ENCODE measurements at regions of chr20 and their contacts with region 1.

Region 1: GRCh38 chr20:34040300-34040995 is 46.7 kb downstream of the RALY start:
- DNase-seq: no peak
- ATAC-seq: peak; percentile 50 to 69

Region 2: DNA sequence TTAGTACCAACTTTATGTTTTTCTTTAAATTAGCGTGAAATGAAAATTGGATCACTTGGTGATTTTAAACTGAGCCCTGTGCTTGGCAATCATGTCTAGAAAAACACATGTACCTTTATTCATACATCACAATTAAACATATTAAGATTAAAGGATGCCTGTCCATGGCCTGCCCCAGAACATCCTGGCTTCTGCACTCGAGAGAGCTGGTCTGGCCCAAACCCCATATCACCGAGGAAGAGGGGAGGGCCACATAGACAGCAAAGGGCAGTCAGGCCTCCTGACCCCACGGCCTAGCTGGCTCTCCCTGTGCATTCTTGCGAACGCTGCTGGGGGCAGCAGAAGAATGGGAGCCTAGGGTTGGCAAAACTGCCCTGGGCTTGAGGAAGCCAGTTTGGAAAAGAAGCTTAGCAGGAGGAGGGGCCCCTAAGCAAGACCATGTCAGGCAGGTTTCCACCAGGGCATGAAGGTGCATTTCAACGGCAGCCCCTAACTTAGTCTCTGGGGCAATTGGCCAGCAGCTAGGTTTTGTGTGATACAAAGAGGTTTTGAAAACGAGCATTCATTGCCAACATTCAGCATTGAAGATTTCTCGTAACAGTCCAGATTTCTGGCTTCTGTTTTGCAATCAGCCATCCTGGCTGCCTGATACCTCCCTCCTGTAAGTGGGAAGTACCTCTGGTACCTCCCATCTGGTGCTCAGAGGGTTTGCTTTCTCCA is 978.2 kb before region 1 on chr20:
- intact Hi-C with region 1: no loop called
- DNase-seq: no peak
- ATAC-seq: peak; percentile 45 to 71

Region 3: DNA sequence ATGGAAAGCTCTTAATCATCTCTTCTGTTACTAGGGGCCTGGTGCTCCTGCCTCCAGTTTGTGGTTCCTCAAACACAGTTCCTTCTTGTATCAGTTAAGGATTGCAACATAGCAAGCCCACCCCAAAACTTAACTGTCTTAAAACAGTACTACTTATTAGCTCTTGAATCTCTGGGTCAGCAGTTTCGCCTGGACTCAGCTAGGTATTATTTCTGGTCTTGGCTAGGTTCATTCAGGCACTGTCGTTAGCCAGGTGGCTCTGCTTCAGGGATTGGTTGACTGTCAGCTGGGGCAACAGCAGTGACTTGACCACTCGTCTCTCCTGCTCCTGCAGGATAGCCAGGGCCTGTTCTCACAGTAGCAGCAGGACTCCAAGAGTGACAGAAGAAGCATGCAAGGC is 76.7 kb before region 1 on chr20:
- intact Hi-C with region 1: no loop called
- DNase-seq: no peak
- ATAC-seq: no peak

Region 4: DNA sequence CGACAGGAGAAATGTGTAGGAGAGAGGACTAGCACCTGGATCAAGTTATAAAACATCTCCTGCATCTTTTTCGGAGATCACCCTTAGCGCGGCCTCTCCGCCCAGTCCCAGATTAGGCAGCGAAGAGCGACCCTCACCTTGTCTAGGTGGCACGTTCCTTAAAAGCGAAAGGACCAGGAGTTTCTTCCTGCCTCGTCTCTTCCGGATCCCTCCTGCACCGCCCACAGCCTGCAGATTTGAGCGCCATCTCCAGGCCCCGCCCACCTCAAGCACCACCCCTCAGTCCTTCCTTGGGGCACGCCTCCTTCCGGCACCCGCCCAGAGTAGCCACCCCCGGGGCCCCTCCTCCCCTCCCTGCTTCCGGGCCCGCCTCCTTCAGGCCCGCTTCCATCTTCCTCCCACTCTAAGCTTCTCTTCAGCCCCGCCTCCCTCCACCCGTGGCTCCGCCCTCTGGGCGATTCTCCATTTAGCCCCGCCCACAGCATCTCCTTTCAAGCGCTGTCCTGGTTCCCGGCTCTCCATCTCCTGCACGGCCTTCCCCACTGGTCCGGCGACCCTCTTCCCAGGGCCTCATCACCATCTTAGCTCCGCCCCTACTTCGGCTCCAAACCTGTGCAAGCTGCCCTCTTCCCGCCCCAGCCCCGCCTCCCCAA is 47.4 kb before region 1 on chr20:
- intact Hi-C with region 1: loop called in 1 of 2 experiments (anchors 2 kb)
- DNase-seq: peak; percentile 99
- ATAC-seq: peak; percentile 91 to 95